Natural killer cell (primary cell): ENCODE measurements at regions of chr11 and their contacts with region 1.

Region 1: DNA sequence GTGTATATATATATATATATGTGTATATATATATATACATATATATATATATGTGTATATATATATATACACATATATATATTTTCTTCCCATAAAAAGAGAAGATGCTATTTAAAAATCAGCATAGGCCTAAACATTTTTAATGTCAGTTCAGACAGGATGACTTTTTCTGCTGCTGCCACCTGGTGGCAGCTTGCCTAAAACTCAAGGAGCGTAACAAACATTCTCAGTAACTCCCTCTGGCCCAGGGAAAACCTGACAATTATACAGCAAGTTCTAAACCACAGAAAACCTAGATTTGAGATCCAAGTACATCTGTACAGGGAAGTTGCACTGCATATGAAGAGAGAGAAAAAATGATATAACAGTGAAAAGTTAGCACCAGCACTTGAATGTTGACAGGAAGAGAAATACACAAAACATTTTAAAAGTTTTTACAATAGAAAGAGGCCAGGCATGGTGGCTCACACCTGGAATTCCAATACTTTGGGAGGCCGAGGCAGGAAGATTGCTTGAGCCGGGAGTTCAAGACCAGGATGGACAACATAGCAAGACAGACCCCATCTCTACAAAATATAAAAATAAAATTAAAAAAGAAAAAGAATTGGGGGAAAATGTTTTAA is 16.6 kb downstream of the OR8A1 start:
- DNase-seq: peak in 1 of 2 donors; percentile 64
- ATAC-seq: peak in 1 of 3 donors; percentile 54
- H3K4me3 ChIP-seq: no peak overlapping the region
- H3K4me3 Mint-ChIP-seq: no peak overlapping the region
- H3K27ac ChIP-seq: no peak overlapping the region
- H3K27ac Mint-ChIP-seq: no peak overlapping the region
- H3K4me1 ChIP-seq: no peaks in the 10 kb centered on the region
- H3K4me1 Mint-ChIP-seq: no peaks in the 10 kb centered on the region
- H3K27me3 ChIP-seq: peaks cover 6% of the 10 kb centered on the region
- H3K27me3 Mint-ChIP-seq: peaks cover 16 to 19% of the 10 kb centered on the region in 2 donors
- CTCF ChIP-seq: peak; percentile 51

Region 2: GRCh38 chr11:124415356-124415923 is 170.9 kb before region 1 on chr11:
- intact Hi-C with region 1: loop called (anchors 5 kb)
- DNase-seq: peak in 1 of 2 donors; percentile 41
- ATAC-seq: no peak
- H3K4me3 ChIP-seq: no peak overlapping the region
- H3K4me3 Mint-ChIP-seq: no peak overlapping the region
- H3K27ac ChIP-seq: no peak overlapping the region
- H3K27ac Mint-ChIP-seq: no peak overlapping the region
- H3K4me1 ChIP-seq: no peaks in the 10 kb centered on the region
- H3K4me1 Mint-ChIP-seq: no peaks in the 10 kb centered on the region
- H3K27me3 ChIP-seq: peaks cover 2% of the 10 kb centered on the region
- H3K27me3 Mint-ChIP-seq: peaks cover 3 to 8% of the 10 kb centered on the region in 2 donors
- CTCF ChIP-seq: peak; percentile 18

Region 3: GRCh38 chr11:124570160-124570559 is 16.2 kb before region 1 on chr11:
- intact Hi-C with region 1: no loop called
- DNase-seq: no peak
- ATAC-seq: no peak
- H3K4me3 ChIP-seq: no peak overlapping the region
- H3K4me3 Mint-ChIP-seq: no peak overlapping the region
- H3K27ac ChIP-seq: no peak overlapping the region
- H3K27ac Mint-ChIP-seq: no peak overlapping the region
- H3K4me1 ChIP-seq: no peaks in the 10 kb centered on the region
- H3K4me1 Mint-ChIP-seq: no peaks in the 10 kb centered on the region
- H3K27me3 ChIP-seq: no peaks in the 10 kb centered on the region
- H3K27me3 Mint-ChIP-seq: peaks cover 7 to 46% of the 10 kb centered on the region in 2 donors
- CTCF ChIP-seq: no peak